K562 (cell line): ENCODE measurements at regions of chr12 and their contacts with region 1.

Region 1: DNA sequence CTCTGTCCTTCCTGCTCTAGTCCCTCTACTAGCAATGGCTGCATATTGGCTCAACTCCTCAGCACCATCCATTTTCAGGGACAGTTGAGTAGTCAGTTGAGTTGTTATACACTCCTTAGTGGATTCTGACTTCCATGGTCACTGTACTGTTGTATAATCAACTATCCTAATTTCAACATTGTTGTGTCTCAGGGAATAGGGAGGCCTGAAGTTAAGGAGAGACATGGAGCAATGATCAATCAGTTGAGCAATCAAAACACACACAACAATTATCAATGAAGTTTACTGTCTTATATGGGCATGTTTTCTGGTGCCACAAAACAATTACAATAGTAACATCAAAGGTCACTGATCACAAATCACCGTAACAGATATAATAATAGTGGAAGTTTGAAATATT is 255.9 kb downstream of the KCNC2 start:
- DNase-seq: no peak
- ATAC-seq: no peak
- H3K4me3 ChIP-seq: no peak overlapping the region
- H3K27ac ChIP-seq: no peak overlapping the region
- H3K4me1 ChIP-seq: no peaks in the 10 kb centered on the region
- H3K27me3 ChIP-seq: no peaks in the 10 kb centered on the region
- CTCF ChIP-seq: no peak
- EP300 ChIP-seq: no peak
- POLR2A ChIP-seq: no peak
- RAD21 ChIP-seq: no peak

Region 2: DNA sequence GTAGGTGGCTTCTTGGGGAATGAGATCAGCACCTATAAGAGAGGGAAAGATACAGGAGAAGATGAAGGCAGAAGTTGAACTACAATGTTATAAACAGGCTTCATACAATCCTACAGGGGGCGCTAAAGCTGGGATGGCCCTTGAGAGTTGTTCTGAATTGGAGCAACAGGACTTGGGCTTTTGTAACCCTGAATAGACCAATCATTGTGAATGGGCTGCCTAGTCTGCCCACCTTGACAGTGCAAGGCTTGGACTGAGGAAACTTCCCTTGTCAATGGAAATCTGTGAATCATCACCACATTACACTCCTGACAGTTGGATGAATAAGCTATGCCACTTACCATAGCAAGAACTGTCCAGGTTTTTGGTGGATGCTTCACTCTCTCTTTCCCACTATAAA is 50.2 kb before region 1 on chr12:
- CTCF ChIA-PET with region 1: no interaction called
- POLR2A ChIA-PET with region 1: no interaction called
- in situ Hi-C with region 1: no loop called
- intact Hi-C with region 1: no loop called
- DNase-seq: peak in 1 of 4 experiments; percentile 4
- ATAC-seq: no peak
- H3K4me3 ChIP-seq: no peak overlapping the region
- H3K27ac ChIP-seq: no peak overlapping the region
- H3K4me1 ChIP-seq: no peaks in the 10 kb centered on the region
- H3K27me3 ChIP-seq: no peaks in the 10 kb centered on the region
- CTCF ChIP-seq: no peak
- EP300 ChIP-seq: no peak
- POLR2A ChIP-seq: no peak
- RAD21 ChIP-seq: no peak

Region 3: GRCh38 chr12:74941670-74942069 is 12.0 kb before region 1 on chr12:
- CTCF ChIA-PET with region 1: no interaction called
- POLR2A ChIA-PET with region 1: no interaction called
- in situ Hi-C with region 1: no loop called
- intact Hi-C with region 1: loop called (anchors 1 kb)
- DNase-seq: no peak
- ATAC-seq: no peak
- H3K4me3 ChIP-seq: no peak overlapping the region
- H3K27ac ChIP-seq: no peak overlapping the region
- H3K4me1 ChIP-seq: no peaks in the 10 kb centered on the region
- H3K27me3 ChIP-seq: no peaks in the 10 kb centered on the region
- CTCF ChIP-seq: no peak
- EP300 ChIP-seq: no peak
- POLR2A ChIP-seq: no peak
- RAD21 ChIP-seq: no peak